Activated CD4-positive, alpha-beta T cell treated with anti-CD3 and anti-CD28 coated beads for 36 hours (primary cell): ENCODE measurements at regions of chr1 and their contacts with region 1.

Region 1: DNA sequence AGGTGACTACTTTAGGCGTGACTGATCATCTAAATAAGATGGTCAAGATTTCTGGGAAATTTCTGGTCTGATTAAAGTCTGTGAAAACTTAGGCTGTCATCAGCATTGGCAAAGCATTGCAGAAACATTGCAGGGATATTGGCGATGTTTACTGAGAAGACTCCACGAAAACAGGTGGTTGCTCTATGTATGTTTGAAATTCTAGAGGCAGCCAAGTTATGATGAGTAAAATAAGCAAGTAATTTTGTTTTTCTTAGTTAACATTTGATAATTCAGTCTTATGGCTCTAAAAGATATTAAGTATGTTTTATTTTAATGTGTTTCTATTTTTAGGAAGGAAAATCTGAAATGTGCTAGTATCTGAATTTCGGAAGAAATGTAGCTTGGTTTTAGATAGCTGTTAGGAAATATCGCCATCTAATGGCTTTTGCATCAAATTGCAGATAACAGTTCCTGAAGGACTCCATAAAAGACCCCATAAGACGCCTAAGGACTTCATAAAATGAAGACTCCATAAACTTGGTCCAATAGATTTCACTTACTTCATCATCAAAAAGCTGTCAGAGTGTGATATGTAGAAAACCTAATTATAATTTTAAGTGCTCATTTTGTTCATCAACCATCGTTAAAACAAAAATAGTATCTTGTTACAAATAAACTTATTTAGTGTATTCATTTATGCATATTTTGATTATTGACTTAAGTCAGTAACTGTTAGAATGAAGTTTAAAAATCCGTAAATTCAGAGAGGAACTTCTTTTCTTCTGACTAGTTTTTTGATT is 344.6 kb downstream of the RYR2 start:
- DNase-seq: no peak
- ATAC-seq: no peak
- H3K4me3 Mint-ChIP-seq: no peak overlapping the region
- H3K27ac Mint-ChIP-seq: no peak overlapping the region
- H3K4me1 Mint-ChIP-seq: no peaks in the 10 kb centered on the region
- H3K27me3 Mint-ChIP-seq: peaks cover 2% of the 10 kb centered on the region

Region 2: DNA sequence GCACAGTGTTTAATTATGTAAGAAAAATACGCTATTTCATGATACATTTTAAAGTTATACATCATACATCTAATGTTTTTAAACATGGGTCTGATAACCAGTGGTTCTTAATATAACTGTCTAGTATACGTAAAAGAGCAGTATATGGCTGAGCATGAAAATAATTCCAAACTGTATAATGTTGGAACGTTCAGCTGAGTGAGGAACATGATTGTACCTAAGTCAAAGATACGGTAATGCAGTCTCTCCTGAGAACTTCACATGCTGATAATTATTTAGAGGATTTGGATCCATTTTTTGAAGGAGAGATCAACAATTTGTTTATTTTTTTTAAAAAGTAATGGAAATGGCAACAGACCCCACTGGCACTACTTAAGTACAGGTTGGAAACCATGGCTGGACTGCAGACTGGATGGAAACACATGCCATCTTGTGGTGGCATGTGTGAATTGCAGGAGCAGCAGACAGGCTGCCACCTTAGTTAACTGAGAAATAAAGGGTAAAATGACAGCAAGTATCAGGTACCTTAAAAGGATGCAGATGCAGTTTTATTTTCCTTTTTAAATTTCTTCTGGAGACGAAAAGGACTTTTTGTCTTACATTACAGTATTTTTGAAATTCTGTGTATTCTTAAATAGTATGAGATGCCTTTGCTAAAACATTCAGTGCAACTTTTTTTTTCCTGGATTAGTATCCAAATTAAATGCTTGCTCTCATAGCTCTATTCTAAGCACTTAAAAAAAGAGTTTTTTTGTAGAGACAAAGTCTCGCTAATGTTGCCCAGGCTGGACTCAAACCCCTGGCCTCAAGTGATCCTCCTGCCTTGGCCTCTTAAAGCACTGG is 517.7 kb before region 1 on chr1:
- CTCF ChIA-PET with region 1: no interaction called
- POLR2A ChIA-PET with region 1: no interaction called
- intact Hi-C with region 1: loop called in 1 of 2 experiments (anchors 10 kb)
- DNase-seq: peak; percentile 63
- ATAC-seq: peak; percentile 76
- H3K4me3 Mint-ChIP-seq: no peak overlapping the region
- H3K27ac Mint-ChIP-seq: no peak overlapping the region
- H3K4me1 Mint-ChIP-seq: peaks cover 3% of the 10 kb centered on the region
- H3K27me3 Mint-ChIP-seq: no peaks in the 10 kb centered on the region

Region 3: GRCh38 chr1:237041795-237042525 is 344.6 kb before region 1 on chr1 and contains the start of gene RYR2:
- CTCF ChIA-PET with region 1: interaction called, 4 read pairs
- POLR2A ChIA-PET with region 1: no interaction called
- intact Hi-C with region 1: loop called (anchors 2 to 10 kb)
- DNase-seq: peak; percentile 52
- ATAC-seq: peak; percentile 75
- H3K4me3 Mint-ChIP-seq: no peak within 1 kb of the TSS
- H3K27ac Mint-ChIP-seq: no peak within 1 kb of the TSS
- H3K4me1 Mint-ChIP-seq: peaks cover 16% of the 10 kb centered on the region
- H3K27me3 Mint-ChIP-seq: peaks cover 44% of the 10 kb centered on the region
- total RNA-seq, gene RYR2: 0.04 to 0.05 TPM

Region 4: DNA sequence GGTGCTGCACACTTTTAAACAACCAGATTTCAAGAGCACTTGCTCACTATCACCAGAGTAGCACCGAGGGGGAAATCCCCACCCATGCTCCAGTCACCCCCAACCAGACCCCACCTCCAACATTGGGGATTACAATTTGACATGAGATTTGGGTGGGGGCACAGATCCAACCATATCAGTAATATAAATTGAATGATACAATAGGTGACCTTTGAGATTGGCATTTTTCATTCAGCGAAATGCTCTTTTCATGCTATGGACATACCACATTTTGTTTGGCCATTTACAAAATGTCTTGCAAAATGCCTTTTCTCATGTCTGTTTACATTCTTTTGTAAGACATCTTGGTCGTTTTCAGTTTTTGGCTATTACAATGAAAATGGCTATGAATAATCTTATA is 320.6 kb before region 1 on chr1:
- CTCF ChIA-PET with region 1: no interaction called
- POLR2A ChIA-PET with region 1: no interaction called
- intact Hi-C with region 1: no loop called
- DNase-seq: no peak
- ATAC-seq: no peak
- H3K4me3 Mint-ChIP-seq: no peak overlapping the region
- H3K27ac Mint-ChIP-seq: no peak overlapping the region
- H3K4me1 Mint-ChIP-seq: no peaks in the 10 kb centered on the region
- H3K27me3 Mint-ChIP-seq: peaks cover 8% of the 10 kb centered on the region